Breast epithelium (tissue), 4 donors: ENCODE measurements at regions of chr12 and their contacts with region 1.

Region 1: GRCh38 chr12:52351196-52352059 is 15.9 kb downstream of the KRT85 start:
- DNase-seq: peak; percentile 64 to 82
- H3K4me3 ChIP-seq: no peak overlapping the region
- H3K27ac ChIP-seq: peak overlapping the region; percentile 49 to 75
- H3K4me1 ChIP-seq: no peaks in the 10 kb centered on the region
- H3K27me3 ChIP-seq: no peaks in the 10 kb centered on the region
- CTCF ChIP-seq: no peak
- POLR2A ChIP-seq: no peak

Region 2: DNA sequence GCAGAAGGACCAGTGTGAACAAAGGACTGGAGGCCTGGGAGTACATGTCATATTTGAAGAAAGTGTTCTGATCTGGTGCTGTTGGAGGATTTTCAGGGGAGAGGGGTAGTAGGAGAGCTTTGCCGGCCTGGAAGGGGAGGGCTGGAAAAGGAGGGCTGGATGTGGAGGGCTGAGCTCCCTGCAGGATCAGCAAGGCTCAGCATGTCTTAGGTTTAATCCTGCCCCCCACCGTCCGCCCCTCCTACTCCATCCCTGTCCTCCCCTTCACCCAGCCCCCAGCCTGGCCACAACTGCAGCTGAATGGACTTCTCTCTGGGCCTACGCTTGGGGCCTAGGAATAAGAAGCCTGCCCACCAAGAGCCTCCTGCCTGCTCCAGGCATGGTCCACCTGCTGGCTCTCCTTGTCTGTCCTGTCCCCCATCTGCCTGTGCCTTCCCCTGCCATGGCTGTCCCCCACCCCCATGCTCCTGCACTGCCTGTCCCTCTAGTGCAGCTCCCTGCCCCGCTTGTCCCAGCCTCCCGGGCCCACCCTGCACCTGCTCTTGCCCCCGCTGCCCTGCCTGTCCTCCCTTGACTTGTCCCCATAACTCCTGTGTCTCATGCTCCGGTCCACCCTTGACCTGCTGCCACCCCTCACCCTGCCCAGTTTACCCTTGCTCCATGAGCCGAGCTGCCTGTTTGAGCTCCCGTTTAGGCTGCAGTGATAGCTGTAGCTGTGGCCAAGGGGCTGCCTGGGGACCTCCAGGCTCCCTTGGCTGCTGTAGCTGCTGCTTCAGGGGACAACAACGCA is 890.4 kb after region 1 on chr12:
- intact Hi-C with region 1: loop called (anchors 5 kb)
- DNase-seq: no peak
- H3K4me3 ChIP-seq: no peak overlapping the region
- H3K27ac ChIP-seq: no peak overlapping the region
- H3K4me1 ChIP-seq: no peaks in the 10 kb centered on the region
- H3K27me3 ChIP-seq: no peaks in the 10 kb centered on the region
- CTCF ChIP-seq: no peak
- POLR2A ChIP-seq: no peak